Posterior cingulate gyrus (tissue), 11 donors: ENCODE measurements at regions of chr4 and their contacts with region 1.

Region 1: GRCh38 chr4:6673660-6674499 is 19.8 kb upstream of the S100P start:
- DNase-seq: peak; percentile 89 to 99 (median 92)

Region 2: GRCh38 chr4:6640292-6641163 is 33.4 kb before region 1 on chr4 and contains the start of gene MRFAP1:
- intact Hi-C with region 1: loop called (anchors 2 kb)
- DNase-seq: peak; percentile 85 to 99 (median 90)